ENCODE measurements at regions of chr3 and their contacts with region 1.

Region 1: GRCh38 chr3:156674046-156674910 is at the start of gene TIPARP:
- DNase-seq: peak; percentile 99
- ATAC-seq: peak; percentile 84
- H3K4me3 ChIP-seq: peak within 1 kb of the TSS; percentile 98
- H3K27ac ChIP-seq: peak within 1 kb of the TSS; percentile 73
- H3K4me1 ChIP-seq: no peaks in the 10 kb centered on the region
- H3K27me3 ChIP-seq: no peaks in the 10 kb centered on the region
- CTCF ChIP-seq: peak; percentile 63 to 90 (median 86)
- EP300 ChIP-seq: peak; percentile 65 to 71
- POLR2A ChIP-seq: peak; percentile 100
- RAD21 ChIP-seq: peak; percentile 81
- polyA plus RNA-seq, gene TIPARP: 3.2 to 3.3 TPM

Region 2: GRCh38 chr3:156483961-156484787 is 190.1 kb before region 1 on chr3:
- CTCF ChIA-PET with region 1: interaction called, 3 read pairs
- POLR2A ChIA-PET with region 1: no interaction called
- RAD21 ChIA-PET with region 1: interaction called, 3 read pairs
- SMC1A ChIA-PET with region 1: interaction called, 5 read pairs
- in situ Hi-C with region 1: no loop called
- intact Hi-C with region 1: loop called (anchors 1 kb)
- DNase-seq: peak; percentile 77
- ATAC-seq: peak; percentile 92
- H3K4me3 ChIP-seq: peak overlapping the region; percentile 67
- H3K27ac ChIP-seq: peak overlapping the region; percentile 89
- H3K4me1 ChIP-seq: peaks cover 15% of the 10 kb centered on the region
- H3K27me3 ChIP-seq: no peaks in the 10 kb centered on the region
- CTCF ChIP-seq: no peak
- EP300 ChIP-seq: peak in 1 of 2 experiments; percentile 38; a peak in 3 of 4 replicates
- POLR2A ChIP-seq: no peak
- RAD21 ChIP-seq: no peak

Region 3: DNA sequence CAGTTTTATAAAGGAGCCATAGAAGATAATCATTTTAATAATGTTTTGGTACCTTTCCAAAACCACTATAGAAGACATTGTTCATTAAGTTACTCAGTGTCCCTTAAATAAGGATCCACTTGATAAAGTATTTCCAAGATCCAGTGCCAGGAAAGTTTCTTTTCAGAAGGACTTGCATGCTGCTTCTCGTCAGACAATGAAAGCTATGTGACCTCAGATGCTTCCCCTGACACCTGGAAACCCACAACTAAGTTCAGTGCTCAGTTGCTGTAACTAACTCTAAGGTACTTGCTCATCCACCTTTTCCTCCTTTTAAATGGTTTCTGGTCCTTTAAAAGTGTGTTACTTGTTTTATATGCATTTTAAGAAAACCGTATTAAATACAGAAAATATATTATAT is 126.6 kb before region 1 on chr3:
- CTCF ChIA-PET with region 1: interaction called, 43 read pairs
- POLR2A ChIA-PET with region 1: interaction called, 7 read pairs
- RAD21 ChIA-PET with region 1: interaction called, 64 read pairs
- SMC1A ChIA-PET with region 1: interaction called, 36 read pairs
- in situ Hi-C with region 1: loop called (anchors 5 kb)
- intact Hi-C with region 1: no loop called
- DNase-seq: no peak
- ATAC-seq: no peak
- H3K4me3 ChIP-seq: no peak overlapping the region
- H3K27ac ChIP-seq: no peak overlapping the region
- H3K4me1 ChIP-seq: no peaks in the 10 kb centered on the region; the same call in 1 of the 2 replicates
- H3K27me3 ChIP-seq: no peaks in the 10 kb centered on the region
- CTCF ChIP-seq: no peak
- EP300 ChIP-seq: no peak
- POLR2A ChIP-seq: no peak
- RAD21 ChIP-seq: no peak

Region 4: GRCh38 chr3:156630081-156630772 is 44.1 kb before region 1 on chr3:
- CTCF ChIA-PET with region 1: interaction called, 8 read pairs
- POLR2A ChIA-PET with region 1: no interaction called
- RAD21 ChIA-PET with region 1: interaction called, 6 read pairs
- SMC1A ChIA-PET with region 1: interaction called, 12 read pairs
- in situ Hi-C with region 1: no loop called
- intact Hi-C with region 1: no loop called
- DNase-seq: no peak
- ATAC-seq: no peak
- H3K4me3 ChIP-seq: no peak overlapping the region
- H3K27ac ChIP-seq: no peak overlapping the region
- H3K4me1 ChIP-seq: no peaks in the 10 kb centered on the region
- H3K27me3 ChIP-seq: no peaks in the 10 kb centered on the region
- CTCF ChIP-seq: no peak
- EP300 ChIP-seq: no peak
- POLR2A ChIP-seq: no peak
- RAD21 ChIP-seq: no peak

Region 5: GRCh38 chr3:156723182-156723619 is 48.9 kb after region 1 on chr3:
- CTCF ChIA-PET with region 1: interaction called, 6 read pairs
- POLR2A ChIA-PET with region 1: no interaction called
- RAD21 ChIA-PET with region 1: interaction called, 3 read pairs
- SMC1A ChIA-PET with region 1: interaction called, 11 read pairs
- in situ Hi-C with region 1: no loop called
- intact Hi-C with region 1: no loop called
- DNase-seq: no peak
- ATAC-seq: peak; percentile 55
- H3K4me3 ChIP-seq: no peak overlapping the region
- H3K27ac ChIP-seq: no peak overlapping the region
- H3K4me1 ChIP-seq: no peaks in the 10 kb centered on the region
- H3K27me3 ChIP-seq: no peaks in the 10 kb centered on the region
- CTCF ChIP-seq: no peak
- EP300 ChIP-seq: no peak
- POLR2A ChIP-seq: no peak
- RAD21 ChIP-seq: no peak

Region 6: GRCh38 chr3:157064402-157064801 is 390.1 kb after region 1 on chr3:
- CTCF ChIA-PET with region 1: interaction called, 10 read pairs
- POLR2A ChIA-PET with region 1: no interaction called
- RAD21 ChIA-PET with region 1: interaction called, 7 read pairs
- SMC1A ChIA-PET with region 1: interaction called, 10 read pairs
- in situ Hi-C with region 1: no loop called
- intact Hi-C with region 1: no loop called
- DNase-seq: peak; percentile 48
- ATAC-seq: peak; percentile 81
- H3K4me3 ChIP-seq: no peak overlapping the region
- H3K27ac ChIP-seq: peak overlapping the region; percentile 48; the same call in 1 of the 2 replicates
- H3K4me1 ChIP-seq: peaks cover 38% of the 10 kb centered on the region
- H3K27me3 ChIP-seq: no peaks in the 10 kb centered on the region
- CTCF ChIP-seq: no peak
- EP300 ChIP-seq: peak; percentile 46 to 59; a peak in 2 of 4 replicates
- POLR2A ChIP-seq: no peak
- RAD21 ChIP-seq: 0 out of 2 replicates have a peak, but pooled peaks have one; percentile 14